Motor neuron (in vitro differentiated cells): ENCODE measurements at regions of chr1 and their contacts with region 1.

Region 1: DNA sequence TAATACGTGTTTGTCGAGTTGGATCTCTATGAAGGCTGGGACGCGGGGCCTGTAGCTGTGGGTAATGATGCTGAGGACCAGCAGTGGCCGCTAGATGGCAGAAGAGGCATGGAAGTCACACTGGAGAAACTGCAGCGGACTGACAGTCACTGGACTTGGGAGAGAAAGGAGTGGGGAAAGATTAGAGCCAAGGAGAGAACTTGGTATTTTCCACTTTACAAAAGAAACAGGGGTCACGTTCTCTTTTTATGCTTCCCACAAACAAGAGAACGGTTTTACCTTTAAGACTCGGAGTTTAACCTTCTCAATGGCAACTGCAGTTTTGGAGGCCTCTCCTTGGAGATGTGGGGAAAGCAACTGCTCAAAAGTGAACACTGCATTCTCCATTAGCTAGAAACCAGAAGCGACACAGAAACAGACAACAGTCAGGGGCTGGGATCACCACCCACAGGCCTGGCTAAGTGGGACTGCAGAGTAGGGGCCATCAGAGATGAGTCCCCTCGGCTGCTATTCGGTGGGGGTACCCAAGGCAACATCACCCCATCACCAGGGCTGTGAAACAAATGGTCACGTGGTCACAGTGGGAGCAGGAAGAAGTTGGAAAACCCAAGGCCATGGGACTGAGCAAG is 51.1 kb upstream of the EDEM3 start:
- ATAC-seq: peak; percentile 99 to 100 (median 100)
- H3K4me3 ChIP-seq: no peak overlapping the region
- H3K27ac ChIP-seq: no peak overlapping the region
- H3K4me1 ChIP-seq: no peaks in the 10 kb centered on the region

Region 2: GRCh38 chr1:184973272-184974055 is 167.7 kb after region 1 on chr1:
- in situ Hi-C with region 1: loop called in 2 of 9 experiments (anchors 10 to 25 kb)
- ATAC-seq: peak in 6 of 8 experiments; percentile 59 to 87 (median 72)
- H3K4me3 ChIP-seq: peak overlapping the region; percentile 44 to 59 (median 57)
- H3K27ac ChIP-seq: peak overlapping the region; percentile 86 to 87
- H3K4me1 ChIP-seq: peaks cover 13 to 16% of the 10 kb centered on the region in 2 donors

Region 3: DNA sequence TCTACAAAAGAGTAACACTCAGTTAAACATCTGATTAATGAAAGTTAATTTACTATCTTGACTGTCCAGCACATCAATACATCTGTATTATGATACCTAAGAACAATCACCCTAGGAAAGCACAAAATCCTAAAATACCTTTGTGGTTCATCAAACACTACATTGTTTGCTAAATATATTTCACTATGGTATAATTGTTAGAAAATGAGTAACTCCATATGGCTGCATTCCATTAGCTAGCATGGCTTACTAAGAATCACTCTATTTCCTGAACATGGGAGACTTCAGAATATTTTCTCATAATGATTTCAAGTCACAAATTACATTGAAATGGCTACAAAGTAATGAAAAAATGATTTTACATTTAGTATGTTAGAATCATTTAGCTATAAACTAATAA is 338.5 kb after region 1 on chr1:
- in situ Hi-C with region 1: loop called in 1 of 9 experiments (anchors 25 kb)
- ATAC-seq: no peak
- H3K4me3 ChIP-seq: no peak overlapping the region
- H3K27ac ChIP-seq: no peak overlapping the region
- H3K4me1 ChIP-seq: no peaks in the 10 kb centered on the region

Region 4: DNA sequence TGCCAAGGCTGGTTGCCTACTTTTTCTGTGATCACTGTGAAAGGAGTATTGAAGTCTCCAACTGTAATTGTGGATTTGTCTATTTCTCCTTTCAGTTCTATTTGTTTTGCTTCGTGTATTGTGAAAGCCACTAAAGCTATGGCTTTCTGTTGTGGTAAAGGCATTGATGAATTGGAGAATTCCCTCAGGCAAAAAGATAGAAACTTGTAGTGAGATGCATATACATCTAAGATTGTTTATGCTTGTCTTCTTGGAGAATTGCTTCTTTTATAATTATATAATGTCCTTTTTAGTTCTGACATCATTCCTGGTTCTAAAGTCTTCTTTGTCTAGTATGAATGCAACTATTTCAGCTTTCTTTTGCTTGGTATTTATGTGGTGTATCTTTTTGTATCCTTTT is 388.0 kb after region 1 on chr1:
- in situ Hi-C with region 1: loop called in 2 of 9 experiments (anchors 10 to 25 kb)
- ATAC-seq: no peak
- H3K4me3 ChIP-seq: no peak overlapping the region
- H3K27ac ChIP-seq: no peak overlapping the region
- H3K4me1 ChIP-seq: no peaks in the 10 kb centered on the region

Region 5: DNA sequence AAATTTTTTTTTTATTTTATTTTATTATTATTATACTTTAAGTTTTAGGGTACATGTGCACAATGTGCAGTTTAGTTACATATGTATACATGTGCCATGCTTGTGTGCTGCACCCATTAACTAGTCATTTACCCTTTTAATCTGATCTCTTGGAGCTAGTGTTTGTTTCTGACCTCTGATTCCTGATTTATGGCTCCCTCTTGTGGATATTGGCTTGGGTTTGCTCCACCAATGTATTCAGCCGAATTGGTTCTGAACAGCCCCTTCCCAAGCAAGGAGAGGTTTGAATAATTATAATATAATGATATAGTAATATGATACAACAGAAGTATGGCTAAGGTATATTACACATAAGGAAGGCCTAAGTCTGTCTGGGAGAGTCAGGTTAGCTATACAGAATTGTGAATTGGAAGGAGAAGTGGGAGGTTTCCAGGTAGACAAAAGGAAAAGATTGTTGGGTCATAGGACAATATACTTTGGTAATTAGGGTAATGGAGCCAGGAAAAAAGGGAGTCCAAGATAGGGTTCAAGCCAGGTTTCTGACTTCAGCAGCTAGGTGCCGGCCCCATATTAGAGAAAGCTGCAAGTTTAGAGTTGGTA is 875.4 kb after region 1 on chr1:
- in situ Hi-C with region 1: loop called in 1 of 9 experiments (anchors 25 kb)
- ATAC-seq: peak in 5 of 8 experiments; percentile 34 to 83 (median 64)
- H3K4me3 ChIP-seq: no peak overlapping the region
- H3K27ac ChIP-seq: no peak overlapping the region
- H3K4me1 ChIP-seq: no peaks in the 10 kb centered on the region

Region 6: GRCh38 chr1:186244825-186245224 is 1439.0 kb after region 1 on chr1:
- in situ Hi-C with region 1: loop called in 1 of 9 experiments (anchors 25 kb)
- ATAC-seq: no peak
- H3K4me3 ChIP-seq: no peak overlapping the region
- H3K27ac ChIP-seq: no peak overlapping the region
- H3K4me1 ChIP-seq: no peaks in the 10 kb centered on the region